Activated naive CD8-positive, alpha-beta T cell treated with anti-CD3 and anti-CD28 coated beads, Interleukin-2, amount 10 ng/mL, durations not matched to agents 7 days and 5 days (primary cell): ENCODE measurements at regions of chr19 and their contacts with region 1.

Region 1: GRCh38 chr19:55476100-55476775 is at the start of gene ZNF628:
- DNase-seq: peak; percentile 97
- ATAC-seq: peak; percentile 89
- H3K4me3 Mint-ChIP-seq: peak within 1 kb of the TSS; percentile 89
- H3K27ac Mint-ChIP-seq: peak within 1 kb of the TSS; percentile 94
- H3K4me1 Mint-ChIP-seq: peaks cover 18% of the 10 kb centered on the region
- H3K27me3 Mint-ChIP-seq: no peaks in the 10 kb centered on the region
- total RNA-seq, gene ZNF628: 9.4 to 11.5 TPM

Region 2: DNA sequence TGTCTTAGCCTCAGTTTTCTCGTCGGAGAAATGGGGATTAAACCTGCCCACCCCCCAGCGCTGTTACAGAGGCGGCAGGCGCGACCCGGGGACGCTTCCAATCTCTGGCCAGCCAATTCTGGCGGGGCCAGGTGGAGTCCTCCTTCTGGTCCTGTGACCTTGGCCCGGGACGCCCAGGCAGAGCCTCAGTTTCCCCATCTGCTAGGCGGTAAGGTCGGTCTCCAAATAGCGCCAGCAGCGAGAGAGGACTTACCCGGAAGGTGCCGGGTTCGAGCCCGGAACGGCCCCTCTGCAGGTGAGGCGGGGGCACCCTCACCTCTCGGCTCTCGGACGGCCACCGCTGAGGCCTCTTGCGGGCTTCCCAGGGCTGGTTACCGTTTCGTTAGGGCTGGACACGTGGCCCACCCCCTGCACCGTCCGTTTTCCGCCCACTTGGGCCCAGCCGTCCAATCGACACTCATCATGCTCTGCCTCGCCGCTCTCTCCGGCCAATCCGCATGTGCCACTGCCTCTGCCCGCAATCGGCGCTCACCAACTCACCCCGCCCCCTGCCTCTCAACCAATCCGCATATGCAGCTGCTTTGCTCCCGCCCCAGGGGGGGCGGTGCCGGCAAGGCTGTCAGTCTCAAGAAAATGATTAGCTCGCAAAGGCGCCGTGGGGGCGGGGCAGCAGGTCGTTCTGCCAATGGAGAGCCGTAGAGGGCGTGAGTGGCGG is 14.8 kb before region 1 on chr19 and contains the start of gene ISOC2:
- POLR2A ChIA-PET with region 1: interaction called, 18 read pairs
- DNase-seq: peak; percentile 100
- ATAC-seq: peak; percentile 98
- H3K4me3 Mint-ChIP-seq: peak within 1 kb of the TSS; percentile 94
- H3K27ac Mint-ChIP-seq: peak within 1 kb of the TSS; percentile 95
- H3K4me1 Mint-ChIP-seq: peaks cover 15% of the 10 kb centered on the region
- H3K27me3 Mint-ChIP-seq: peaks cover 4% of the 10 kb centered on the region
- total RNA-seq, gene ISOC2: 13.7 to 16.8 TPM

Region 3: DNA sequence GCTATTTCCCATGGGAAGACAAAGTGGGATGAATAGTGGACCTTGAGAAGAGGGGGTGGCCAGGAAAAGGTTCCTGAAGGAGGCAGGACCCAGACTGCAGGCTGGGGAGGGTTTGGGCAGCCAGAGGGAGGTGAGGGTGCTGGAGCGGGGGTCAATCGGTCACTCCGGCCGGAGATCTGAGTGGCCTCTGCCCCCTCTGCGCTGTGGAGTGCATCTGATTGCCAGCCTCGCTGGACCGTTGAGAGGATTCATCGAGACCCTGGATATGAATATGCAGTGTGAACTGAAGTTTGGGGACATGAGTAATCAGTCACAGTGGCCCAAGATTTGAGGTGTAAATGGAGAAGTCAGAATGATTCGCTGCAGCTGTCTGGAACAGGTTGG is 159.1 kb after region 1 on chr19:
- POLR2A ChIA-PET with region 1: interaction called, 12 read pairs
- DNase-seq: no peak
- ATAC-seq: no peak
- H3K4me3 Mint-ChIP-seq: peak overlapping the region; percentile 100
- H3K27ac Mint-ChIP-seq: peak overlapping the region; percentile 100
- H3K4me1 Mint-ChIP-seq: peaks cover 43% of the 10 kb centered on the region
- H3K27me3 Mint-ChIP-seq: peaks cover 7% of the 10 kb centered on the region

Region 4: GRCh38 chr19:55811340-55811739 is 335.1 kb after region 1 on chr19:
- POLR2A ChIA-PET with region 1: no interaction called
- DNase-seq: no peak
- ATAC-seq: no peak
- H3K4me3 Mint-ChIP-seq: no peak overlapping the region
- H3K27ac Mint-ChIP-seq: no peak overlapping the region
- H3K4me1 Mint-ChIP-seq: peaks cover 4% of the 10 kb centered on the region
- H3K27me3 Mint-ChIP-seq: peaks cover 3% of the 10 kb centered on the region